AG04450 (cell line): ENCODE measurements at regions of chr16 and their contacts with region 1.

Region 1: DNA sequence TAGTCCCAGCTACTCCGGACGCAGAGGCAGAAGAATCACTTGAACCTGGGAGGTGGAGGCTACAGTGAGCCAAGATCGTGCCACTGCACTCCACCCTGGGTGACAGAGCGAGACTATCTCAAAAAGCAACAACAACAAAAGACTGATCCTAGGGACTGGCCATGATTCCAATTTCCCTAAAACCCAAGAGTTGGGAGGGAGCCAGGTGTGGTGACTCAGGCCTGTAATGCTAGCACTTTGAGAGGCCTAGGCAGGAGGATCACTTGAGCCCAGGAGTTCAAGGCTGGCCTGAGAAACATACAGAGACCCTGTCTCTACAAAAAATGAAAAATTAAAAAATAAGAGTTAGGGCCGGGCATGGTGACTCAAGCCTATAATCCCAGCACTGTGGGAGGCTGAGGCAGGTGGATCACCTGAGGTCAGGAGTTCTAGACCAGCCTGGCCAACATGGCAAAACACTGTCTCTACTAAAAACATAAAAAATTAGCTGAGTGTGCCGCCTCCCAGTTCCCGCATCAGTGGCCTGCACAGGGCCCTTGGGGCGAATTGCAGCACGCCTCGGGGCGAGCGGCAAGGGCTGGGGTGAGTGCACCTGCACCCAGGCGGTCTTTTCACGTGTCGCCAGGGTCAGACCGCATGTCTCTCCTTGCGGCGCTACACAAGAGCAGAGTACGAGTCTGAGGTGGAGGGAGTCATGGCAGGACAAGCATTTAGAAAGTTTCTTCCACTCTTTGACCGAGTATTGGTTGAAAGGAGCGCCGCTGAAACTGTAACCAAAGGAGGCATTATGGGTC is 40.8 kb downstream of the CDH3 start:
- DNase-seq: no peak
- H3K4me3 ChIP-seq: no peak overlapping the region
- H3K27ac ChIP-seq: no peak overlapping the region
- H3K27me3 ChIP-seq: no peaks in the 10 kb centered on the region
- CTCF ChIP-seq: no peak

Region 2: GRCh38 chr16:68590201-68590994 is 95.5 kb before region 1 on chr16:
- CTCF ChIA-PET with region 1: no interaction called
- POLR2A ChIA-PET with region 1: no interaction called
- DNase-seq: no peak
- H3K4me3 ChIP-seq: no peak overlapping the region
- H3K27ac ChIP-seq: no peak overlapping the region
- H3K27me3 ChIP-seq: no peaks in the 10 kb centered on the region
- CTCF ChIP-seq: peak; percentile 43

Region 3: GRCh38 chr16:68739964-68740627 is 54.2 kb after region 1 on chr16:
- CTCF ChIA-PET with region 1: no interaction called
- POLR2A ChIA-PET with region 1: interaction called, 12 read pairs
- DNase-seq: no peak
- H3K4me3 ChIP-seq: no peak overlapping the region
- H3K27ac ChIP-seq: no peak overlapping the region
- H3K27me3 ChIP-seq: peaks cover 28% of the 10 kb centered on the region
- CTCF ChIP-seq: no peak